Ascending aorta (tissue), 2 donors: ENCODE measurements at regions of chrX and their contacts with region 1.

Region 1: GRCh38 chrX:47361538-47362511 is 8.6 kb upstream of the ZNF157 start:
- DNase-seq: peak; percentile 74 to 91
- H3K4me3 ChIP-seq: peak overlapping the region; percentile 45 to 57
- H3K27ac ChIP-seq: peak overlapping the region; percentile 51 to 58
- H3K4me1 ChIP-seq: no peaks in the 10 kb centered on the region
- H3K27me3 ChIP-seq: no peaks in the 10 kb centered on the region
- CTCF ChIP-seq: peak in 1 of 3 experiments; percentile 19

Region 2: DNA sequence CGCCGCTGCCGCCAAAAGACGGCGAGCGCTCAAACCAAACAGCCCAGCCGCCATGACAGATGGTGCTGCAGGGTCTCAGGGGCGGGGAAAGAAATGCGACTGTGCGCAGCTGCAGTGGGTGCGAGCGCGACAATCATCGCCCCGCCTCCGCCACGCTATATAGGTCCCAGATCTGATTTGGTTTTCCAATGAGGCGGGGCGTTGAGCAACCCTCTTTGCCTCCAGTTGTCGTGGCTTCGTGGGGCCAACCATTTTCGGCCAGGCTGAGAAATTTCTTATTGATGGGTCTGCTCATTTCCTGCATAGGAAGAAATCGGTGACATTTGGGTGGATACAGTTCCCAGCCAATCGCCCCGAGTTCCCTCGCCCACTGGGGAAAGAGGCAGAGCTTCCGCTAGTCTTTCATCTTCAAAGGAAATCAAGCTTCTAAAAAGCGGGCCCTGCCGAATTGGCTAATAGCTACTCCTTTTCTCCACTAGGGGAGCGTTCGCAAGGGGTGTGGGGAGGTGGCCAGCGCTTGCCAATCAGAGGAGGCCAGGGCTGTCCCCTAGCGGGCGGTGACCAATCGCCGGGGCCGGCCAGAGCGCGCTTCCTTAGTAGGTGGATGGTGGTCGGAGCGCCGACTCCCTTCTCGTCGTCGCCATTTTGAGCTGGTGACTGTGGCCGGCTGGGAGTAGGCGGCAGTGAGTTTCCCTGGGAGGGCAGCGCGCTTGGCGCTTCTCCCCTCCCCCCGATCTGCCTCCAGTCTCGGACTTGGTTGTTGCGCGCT is 217.0 kb before region 1 on chrX and contains the starts of genes NDUFB11 and RBM10:
- intact Hi-C with region 1: loop called (anchors 10 kb)
- DNase-seq: peak; percentile 80 to 97
- H3K4me3 ChIP-seq: peak within 1 kb of the TSS; percentile 64 to 66
- H3K27ac ChIP-seq: peak within 1 kb of the TSS; percentile 86 to 95
- H3K4me1 ChIP-seq: no peaks in the 10 kb centered on the region
- H3K27me3 ChIP-seq: no peaks in the 10 kb centered on the region
- CTCF ChIP-seq: peak; percentile 57 to 83 (median 66)
- total RNA-seq, gene NDUFB11: 122 TPM
- total RNA-seq, gene RBM10: 52.4 TPM

Region 3: DNA sequence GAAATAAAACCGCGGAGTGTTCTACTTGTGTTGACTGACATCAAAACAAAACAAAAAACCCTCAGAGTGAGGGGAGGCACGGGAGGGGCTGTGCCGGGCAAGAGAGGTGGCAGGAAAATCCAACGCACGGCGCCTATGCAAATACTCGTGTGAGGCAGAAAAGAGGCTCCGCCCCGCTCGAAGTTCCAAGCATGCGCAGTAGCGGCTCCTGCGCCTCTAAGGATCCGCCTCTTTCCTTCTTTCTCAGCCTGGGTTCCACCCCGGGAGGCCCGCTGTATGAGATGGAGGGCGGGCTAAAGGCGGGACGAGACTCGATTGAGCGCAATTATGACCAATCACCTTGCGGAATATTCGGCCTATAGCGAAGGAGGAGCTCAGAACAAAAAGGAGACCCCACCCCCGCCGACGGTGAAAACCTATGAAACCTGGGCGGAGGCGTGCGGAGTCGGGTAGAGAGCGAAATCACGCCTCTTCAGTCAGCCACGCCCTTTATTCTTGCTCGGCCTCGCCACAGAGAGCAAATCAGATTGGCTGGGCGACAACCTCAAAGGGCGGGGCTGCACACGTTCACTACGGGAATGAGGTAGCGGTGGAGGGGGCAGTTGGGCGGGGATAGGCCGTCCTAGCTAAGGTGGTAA is 144.1 kb before region 1 on chrX:
- intact Hi-C with region 1: loop called (anchors 5 kb)
- DNase-seq: peak; percentile 98 to 100
- H3K4me3 ChIP-seq: peak overlapping the region; percentile 87 to 92
- H3K27ac ChIP-seq: peak overlapping the region; percentile 95 to 97
- H3K4me1 ChIP-seq: peaks cover 3 to 14% of the 10 kb centered on the region in 2 donors
- H3K27me3 ChIP-seq: no peaks in the 10 kb centered on the region
- CTCF ChIP-seq: no peak

Region 4: GRCh38 chrX:47233337-47234113 is 128.3 kb before region 1 on chrX:
- intact Hi-C with region 1: loop called (anchors 5 kb)
- DNase-seq: peak; percentile 96 to 97
- H3K4me3 ChIP-seq: peak overlapping the region; percentile 56 to 88
- H3K27ac ChIP-seq: peak overlapping the region; percentile 89 to 98
- H3K4me1 ChIP-seq: peaks cover 0 to 3% of the 10 kb centered on the region in 2 donors
- H3K27me3 ChIP-seq: no peaks in the 10 kb centered on the region
- CTCF ChIP-seq: no peak

Region 5: DNA sequence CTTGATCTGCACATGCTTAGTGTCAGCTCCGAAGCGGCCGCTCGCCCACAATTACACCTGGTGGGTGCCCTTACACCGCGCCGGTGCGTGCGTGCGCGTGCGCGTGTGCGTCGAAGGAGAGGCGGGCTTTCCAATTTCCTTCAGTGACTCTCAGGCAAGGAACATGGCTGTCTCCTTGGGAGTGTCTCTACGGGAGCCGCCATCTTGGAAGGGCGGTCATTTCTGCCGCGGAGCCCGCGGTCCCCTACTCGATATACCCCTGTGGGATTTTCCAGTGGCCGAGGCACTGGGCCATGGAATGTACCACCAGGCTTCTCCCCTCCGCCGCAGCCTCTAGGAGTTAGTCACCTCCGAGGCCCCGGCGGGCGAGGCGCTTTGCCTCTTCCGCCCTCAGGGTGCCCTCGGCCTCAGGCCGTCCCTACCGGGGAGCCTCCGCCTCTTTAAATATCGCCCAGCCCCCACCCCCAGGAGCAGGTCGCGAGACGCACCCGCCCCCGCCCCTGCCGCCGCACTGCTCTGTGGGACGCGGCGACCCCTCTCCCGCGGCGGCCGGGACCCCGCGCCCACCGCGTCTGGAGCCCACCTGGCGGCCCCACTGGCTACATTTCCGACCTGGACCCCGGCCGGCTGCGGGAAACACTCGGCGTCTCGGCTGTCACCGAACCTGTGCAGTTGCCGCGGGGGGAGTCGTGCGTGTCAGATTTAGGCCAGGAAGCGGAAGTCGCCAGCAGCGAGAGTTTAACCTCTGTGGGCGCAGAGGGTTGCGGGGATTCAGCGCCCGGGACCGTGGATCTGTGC is 120.9 kb after region 1 on chrX and contains the start of gene ZNF41:
- intact Hi-C with region 1: loop called (anchors 10 kb)
- DNase-seq: peak; percentile 18 to 82
- H3K4me3 ChIP-seq: peak within 1 kb of the TSS; percentile 58 to 77
- H3K27ac ChIP-seq: peak within 1 kb of the TSS; percentile 93 to 94
- H3K4me1 ChIP-seq: no peaks in the 10 kb centered on the region
- H3K27me3 ChIP-seq: no peaks in the 10 kb centered on the region
- CTCF ChIP-seq: no peak
- total RNA-seq, gene ZNF41: 2.7 TPM

Region 6: DNA sequence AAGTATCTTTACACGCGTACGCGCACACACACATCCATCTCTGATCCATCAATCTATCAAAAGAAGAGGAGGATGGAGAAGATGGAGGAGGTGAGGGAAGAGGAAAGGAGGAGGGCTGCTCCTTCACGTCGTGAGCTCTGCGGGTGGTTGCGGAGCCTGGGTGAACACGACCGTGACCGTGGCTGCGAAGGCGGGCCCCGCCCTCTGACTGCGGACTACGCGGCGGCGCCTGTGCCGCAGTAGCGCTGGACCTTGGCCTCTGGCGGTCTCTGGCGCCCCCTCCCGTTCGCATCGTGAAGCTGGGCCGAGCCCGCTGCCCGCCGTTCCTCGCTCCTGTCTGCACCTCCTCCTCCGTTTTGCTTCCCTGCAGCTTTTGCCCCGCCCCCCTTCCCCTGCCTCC is 161.5 kb after region 1 on chrX:
- intact Hi-C with region 1: loop called (anchors 5 kb)
- DNase-seq: peak in 1 of 2 donors; percentile 87
- H3K4me3 ChIP-seq: peak overlapping the region; percentile 53 to 65
- H3K27ac ChIP-seq: no peak overlapping the region
- H3K4me1 ChIP-seq: no peaks in the 10 kb centered on the region
- H3K27me3 ChIP-seq: no peaks in the 10 kb centered on the region
- CTCF ChIP-seq: peak; percentile 80 to 85 (median 82)